ENCODE measurements at regions of chr4 and their contacts with region 1.

Region 1: GRCh38 chr4:40185830-40186664 is 10.8 kb upstream of the RHOH start:
- DNase-seq: no peak
- H3K4me3 Mint-ChIP-seq: no peak overlapping the region
- H3K27ac Mint-ChIP-seq: peak overlapping the region; percentile 49
- H3K4me1 Mint-ChIP-seq: peaks cover 63% of the 10 kb centered on the region
- H3K27me3 Mint-ChIP-seq: no peaks in the 10 kb centered on the region

Region 2: GRCh38 chr4:40121515-40121914 is 64.5 kb before region 1 on chr4:
- CTCF ChIA-PET with region 1: interaction called, 3 read pairs
- POLR2A ChIA-PET with region 1: no interaction called
- intact Hi-C with region 1: loop called (anchors 10 kb)
- DNase-seq: peak; percentile 35
- H3K4me3 Mint-ChIP-seq: no peak overlapping the region
- H3K27ac Mint-ChIP-seq: peak overlapping the region; percentile 16
- H3K4me1 Mint-ChIP-seq: peaks cover 44% of the 10 kb centered on the region
- H3K27me3 Mint-ChIP-seq: no peaks in the 10 kb centered on the region

Region 3: DNA sequence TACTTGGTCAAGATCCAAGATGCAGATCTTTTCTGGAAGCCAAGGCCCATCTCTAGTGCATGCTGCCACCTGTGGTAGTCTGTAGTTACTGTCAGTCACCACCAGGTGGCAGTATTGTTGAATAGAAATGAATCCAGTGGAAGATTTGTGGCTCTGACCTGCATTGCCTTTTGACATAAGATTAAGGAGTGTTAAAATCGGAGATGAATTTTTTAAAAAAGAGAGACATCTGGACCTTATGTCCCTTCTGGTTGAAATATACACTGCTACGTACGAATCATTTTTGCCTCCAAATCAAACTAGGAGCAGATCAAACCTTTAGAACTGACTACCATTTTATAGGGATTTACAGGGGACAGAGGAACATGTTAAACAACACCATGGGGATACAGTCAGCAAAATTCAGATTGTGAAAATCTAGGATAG is 36.1 kb before region 1 on chr4:
- CTCF ChIA-PET with region 1: interaction called, 4 read pairs
- POLR2A ChIA-PET with region 1: no interaction called
- intact Hi-C with region 1: loop called (anchors 2 kb)
- DNase-seq: peak; percentile 74
- H3K4me3 Mint-ChIP-seq: no peak overlapping the region
- H3K27ac Mint-ChIP-seq: no peak overlapping the region
- H3K4me1 Mint-ChIP-seq: peaks cover 27% of the 10 kb centered on the region
- H3K27me3 Mint-ChIP-seq: no peaks in the 10 kb centered on the region

Region 4: GRCh38 chr4:40301603-40302002 is 115.6 kb after region 1 on chr4:
- CTCF ChIA-PET with region 1: no interaction called
- POLR2A ChIA-PET with region 1: no interaction called
- intact Hi-C with region 1: no loop called
- DNase-seq: peak; percentile 66
- H3K4me3 Mint-ChIP-seq: peak overlapping the region; percentile 66
- H3K27ac Mint-ChIP-seq: peak overlapping the region; percentile 90
- H3K4me1 Mint-ChIP-seq: peaks cover 85% of the 10 kb centered on the region
- H3K27me3 Mint-ChIP-seq: no peaks in the 10 kb centered on the region

Measured in activated CD4-positive, alpha-beta memory T cell treated with anti-CD3 and anti-CD28 coated beads for 36 hours (primary cell).